ENCODE measurements at regions of chrX and their contacts with region 1.

Region 1: GRCh38 chrX:111445486-111445885 is 33.5 kb upstream of the DCX start:
- DNase-seq: peak; percentile 35
- H3K4me3 ChIP-seq: no peak overlapping the region
- H3K27ac ChIP-seq: no peak overlapping the region
- H3K4me1 ChIP-seq: no peaks in the 10 kb centered on the region
- H3K27me3 ChIP-seq: no peaks in the 10 kb centered on the region
- CTCF ChIP-seq: peak; percentile 50 to 67

Region 2: GRCh38 chrX:110450050-110450449 is 995.4 kb before region 1 on chrX:
- CTCF ChIA-PET with region 1: no interaction called
- dilution Hi-C with region 1: no loop called
- in situ Hi-C with region 1: no loop called
- intact Hi-C with region 1: loop called (anchors 10 kb)
- DNase-seq: peak; percentile 60
- H3K4me3 ChIP-seq: no peak overlapping the region
- H3K27ac ChIP-seq: no peak overlapping the region
- H3K4me1 ChIP-seq: peaks cover 1% of the 10 kb centered on the region
- H3K27me3 ChIP-seq: peaks cover 2% of the 10 kb centered on the region
- CTCF ChIP-seq: peak; percentile 78 to 82

Region 3: GRCh38 chrX:110992611-110993010 is 452.9 kb before region 1 on chrX:
- CTCF ChIA-PET with region 1: no interaction called
- dilution Hi-C with region 1: no loop called
- in situ Hi-C with region 1: no loop called
- intact Hi-C with region 1: loop called (anchors 10 kb)
- DNase-seq: peak; percentile 20
- H3K4me3 ChIP-seq: no peak overlapping the region
- H3K27ac ChIP-seq: no peak overlapping the region
- H3K4me1 ChIP-seq: no peaks in the 10 kb centered on the region
- H3K27me3 ChIP-seq: no peaks in the 10 kb centered on the region
- CTCF ChIP-seq: peak; percentile 59 to 72

Region 4: GRCh38 chrX:111168314-111168713 is 277.2 kb before region 1 on chrX:
- CTCF ChIA-PET with region 1: no interaction called
- dilution Hi-C with region 1: no loop called
- in situ Hi-C with region 1: no loop called
- intact Hi-C with region 1: loop called (anchors 1 kb)
- DNase-seq: peak; percentile 12
- H3K4me3 ChIP-seq: no peak overlapping the region
- H3K27ac ChIP-seq: no peak overlapping the region
- H3K4me1 ChIP-seq: no peaks in the 10 kb centered on the region
- H3K27me3 ChIP-seq: no peaks in the 10 kb centered on the region
- CTCF ChIP-seq: peak in 1 of 2 donors; percentile 49

Region 5: GRCh38 chrX:111262096-111262495 is 183.4 kb before region 1 on chrX:
- CTCF ChIA-PET with region 1: no interaction called
- dilution Hi-C with region 1: no loop called
- in situ Hi-C with region 1: no loop called
- intact Hi-C with region 1: loop called (anchors 2 kb)
- DNase-seq: no peak
- H3K4me3 ChIP-seq: no peak overlapping the region
- H3K27ac ChIP-seq: no peak overlapping the region
- H3K4me1 ChIP-seq: no peaks in the 10 kb centered on the region
- H3K27me3 ChIP-seq: peaks cover 12% of the 10 kb centered on the region
- CTCF ChIP-seq: no peak

Region 6: DNA sequence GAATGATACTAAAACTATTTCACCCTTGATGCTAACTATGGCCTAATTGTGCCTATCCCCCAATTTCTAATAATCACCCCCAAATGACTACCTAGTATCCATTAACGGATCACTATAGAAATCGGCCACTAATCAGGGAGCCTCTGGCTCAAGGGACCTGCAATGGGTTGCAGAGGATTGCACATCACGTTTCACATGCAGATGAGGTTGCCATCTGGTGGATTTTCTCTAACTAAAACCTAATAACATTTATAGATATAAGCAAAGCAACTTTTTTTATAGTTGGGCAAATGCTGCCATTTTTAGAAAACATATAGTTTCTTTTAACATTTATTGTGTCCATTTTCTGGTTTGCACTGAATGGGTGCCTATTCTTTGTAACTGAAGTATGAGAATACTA is 207.2 kb after region 1 on chrX:
- CTCF ChIA-PET with region 1: no interaction called
- dilution Hi-C with region 1: no loop called
- in situ Hi-C with region 1: no loop called
- intact Hi-C with region 1: loop called (anchors 2 kb)
- DNase-seq: no peak
- H3K4me3 ChIP-seq: no peak overlapping the region
- H3K27ac ChIP-seq: no peak overlapping the region
- H3K4me1 ChIP-seq: no peaks in the 10 kb centered on the region
- H3K27me3 ChIP-seq: no peaks in the 10 kb centered on the region
- CTCF ChIP-seq: peak in 1 of 2 donors; percentile 35

Region 7: GRCh38 chrX:111874241-111874640 is 428.8 kb after region 1 on chrX:
- CTCF ChIA-PET with region 1: no interaction called
- dilution Hi-C with region 1: no loop called
- in situ Hi-C with region 1: no loop called
- intact Hi-C with region 1: no loop called
- DNase-seq: no peak
- H3K4me3 ChIP-seq: no peak overlapping the region
- H3K27ac ChIP-seq: no peak overlapping the region
- H3K4me1 ChIP-seq: no peaks in the 10 kb centered on the region
- H3K27me3 ChIP-seq: peaks cover 2% of the 10 kb centered on the region
- CTCF ChIP-seq: no peak

Measured in mammary epithelial cell (primary cell).